BJ (cell line): ENCODE measurements at regions of chr18 and their contacts with region 1.

Region 1: GRCh38 chr18:24672165-24672941 is 211.9 kb downstream of the HRH4 start:
- DNase-seq: no peak
- H3K4me3 ChIP-seq: no peak overlapping the region
- H3K27me3 ChIP-seq: peaks cover 4% of the 10 kb centered on the region; the same call in 1 of the 2 replicates
- CTCF ChIP-seq: peak; percentile 21; the same call in 1 of the 2 replicates

Region 2: GRCh38 chr18:24600076-24600654 is 72.2 kb before region 1 on chr18:
- CTCF ChIA-PET with region 1: interaction called, 12 read pairs
- POLR2A ChIA-PET with region 1: no interaction called
- DNase-seq: peak; percentile 20
- H3K4me3 ChIP-seq: no peak overlapping the region
- H3K27me3 ChIP-seq: peaks cover 7% of the 10 kb centered on the region
- CTCF ChIP-seq: peak; percentile 55

Region 3: DNA sequence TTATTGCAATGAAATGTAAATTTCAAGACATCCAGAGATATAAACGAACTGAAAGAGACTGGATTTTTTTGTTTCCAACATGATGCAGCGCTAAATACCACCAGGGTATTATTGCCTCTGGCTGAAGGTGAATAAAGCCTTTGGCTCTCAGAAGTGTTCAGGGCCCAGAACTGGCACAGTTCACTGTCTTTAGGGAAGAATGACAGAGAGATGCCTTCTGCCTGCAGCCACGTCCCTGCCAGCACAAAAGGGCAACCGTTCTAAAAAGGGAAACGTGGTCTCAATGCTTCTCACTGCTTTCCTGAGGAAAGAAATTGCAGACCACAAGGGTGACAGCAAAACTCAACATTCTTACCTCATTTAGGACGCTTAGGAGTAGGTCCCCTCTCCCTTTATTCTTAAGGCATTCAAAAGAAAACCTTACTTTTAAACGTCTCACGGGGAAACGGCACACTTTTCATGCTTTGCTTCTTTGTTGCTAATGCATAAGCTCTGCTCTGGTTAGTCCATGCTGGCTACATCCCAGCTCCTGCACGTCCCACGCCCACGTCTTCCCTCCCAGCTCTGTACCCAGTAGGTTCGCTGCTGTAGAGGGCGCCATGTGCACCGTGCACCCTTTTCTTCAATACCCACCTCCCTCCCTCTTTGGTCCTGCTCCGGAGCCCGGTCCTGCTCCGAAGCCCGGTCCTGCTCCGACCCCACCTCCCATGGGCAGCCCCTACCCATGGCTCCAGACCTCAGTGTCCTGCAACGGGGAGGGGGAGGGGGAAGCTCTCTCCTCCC is 40.9 kb before region 1 on chr18:
- CTCF ChIA-PET with region 1: no interaction called
- POLR2A ChIA-PET with region 1: no interaction called
- DNase-seq: no peak
- H3K4me3 ChIP-seq: no peak overlapping the region
- H3K27me3 ChIP-seq: no peaks in the 10 kb centered on the region
- CTCF ChIP-seq: no peak